ENCODE measurements at regions of chr1 and their contacts with region 1.

Region 1: GRCh38 chr1:201511941-201512539 is 5.1 kb upstream of the CSRP1 start:
- DNase-seq: no peak
- H3K4me3 ChIP-seq: no peak overlapping the region
- CTCF ChIP-seq: no peak

Region 2: DNA sequence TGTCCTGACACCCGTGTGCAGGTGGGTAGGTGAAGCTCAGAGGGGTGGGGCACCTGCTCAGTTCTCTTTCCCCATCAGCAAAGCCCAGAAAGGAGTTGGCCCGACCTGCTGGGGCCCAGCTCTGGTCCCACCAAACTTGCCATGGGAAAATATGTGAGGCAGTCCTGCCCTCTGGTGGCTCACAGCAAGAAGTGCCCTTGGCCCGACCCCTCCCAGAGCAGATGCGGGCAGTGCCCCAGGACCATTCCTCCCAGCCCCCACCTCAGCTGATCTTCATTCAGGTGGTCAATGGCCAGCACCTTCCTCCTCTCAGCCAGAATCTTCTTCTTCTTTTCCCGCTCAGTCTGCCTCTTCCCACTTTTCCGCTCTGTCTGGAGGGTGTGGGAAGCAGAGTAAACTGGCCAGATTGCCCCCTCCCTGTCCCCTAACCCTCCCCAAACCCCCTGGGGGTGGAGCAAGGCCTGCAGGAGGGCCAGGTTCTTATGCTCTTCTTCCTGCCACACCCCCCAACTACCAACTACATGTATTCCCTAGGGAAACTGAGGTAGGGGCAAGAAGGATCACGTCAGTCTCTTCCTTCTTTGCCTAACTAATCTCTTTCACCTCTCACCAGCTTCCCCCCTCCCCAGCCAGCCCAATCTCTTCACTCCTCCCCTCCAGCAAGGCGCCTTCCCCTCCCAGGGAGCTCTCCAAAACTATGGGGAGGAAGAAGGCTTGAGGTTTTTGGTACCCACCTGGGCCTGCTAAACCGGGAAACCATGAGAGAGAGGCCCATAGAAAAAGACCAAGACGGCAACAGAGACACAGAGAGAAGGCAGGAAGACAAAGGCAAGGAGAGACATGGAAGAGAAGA is 150.2 kb before region 1 on chr1:
- CTCF ChIA-PET with region 1: interaction called, 12 read pairs
- POLR2A ChIA-PET with region 1: no interaction called
- DNase-seq: no peak
- H3K4me3 ChIP-seq: no peak overlapping the region
- CTCF ChIP-seq: peak; percentile 88

Region 3: GRCh38 chr1:201419746-201420607 is 92.1 kb before region 1 on chr1:
- CTCF ChIA-PET with region 1: interaction called, 13 read pairs
- POLR2A ChIA-PET with region 1: no interaction called
- DNase-seq: no peak
- H3K4me3 ChIP-seq: no peak overlapping the region
- CTCF ChIP-seq: no peak

Region 4: DNA sequence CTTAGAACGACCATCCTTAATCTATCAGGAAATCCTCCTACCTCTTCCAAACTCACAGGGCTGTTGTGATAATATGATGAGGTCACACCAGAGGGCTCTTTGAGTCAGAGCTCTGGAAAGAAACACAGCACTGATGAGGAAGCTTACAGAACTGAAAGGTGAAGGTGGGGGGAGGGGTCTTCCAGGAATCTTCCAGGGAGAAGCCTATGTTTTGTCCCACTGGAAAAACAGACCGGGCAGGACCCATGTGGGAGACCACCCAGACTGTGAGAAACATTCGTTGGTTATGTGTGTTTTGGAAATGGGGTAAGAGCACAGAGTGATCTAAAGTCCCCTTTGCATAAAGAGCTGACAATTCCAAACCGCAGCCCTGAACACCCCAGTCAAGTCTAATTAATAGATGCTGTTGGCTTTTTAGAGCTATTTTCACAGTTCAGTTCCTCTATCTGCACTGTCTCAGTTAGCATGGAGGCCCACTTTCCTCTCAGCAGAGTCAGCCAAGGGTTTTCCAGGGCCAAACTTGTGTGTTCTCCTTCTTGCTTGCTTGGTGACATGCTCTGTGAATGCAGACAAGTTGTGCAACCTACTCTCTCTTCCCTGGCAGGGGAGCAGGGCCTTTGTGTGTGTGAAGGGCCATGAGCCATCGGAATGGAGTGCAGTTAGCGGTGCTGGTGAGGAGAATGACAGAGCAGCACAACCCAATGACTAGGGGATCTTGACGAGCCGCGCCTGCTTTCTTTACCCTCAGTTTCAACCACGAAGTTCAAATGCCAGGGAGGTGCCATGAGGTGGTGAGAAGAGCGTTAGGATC is 55.3 kb before region 1 on chr1:
- CTCF ChIA-PET with region 1: interaction called, 305 read pairs
- POLR2A ChIA-PET with region 1: interaction called, 6 read pairs
- DNase-seq: peak; percentile 96
- H3K4me3 ChIP-seq: no peak overlapping the region
- CTCF ChIP-seq: no peak

Region 5: GRCh38 chr1:201525197-201525778 is 13.2 kb after region 1 on chr1:
- CTCF ChIA-PET with region 1: interaction called, 170 read pairs
- POLR2A ChIA-PET with region 1: no interaction called
- DNase-seq: no peak
- H3K4me3 ChIP-seq: no peak overlapping the region
- CTCF ChIP-seq: no peak

Region 6: GRCh38 chr1:201703621-201704439 is 191.8 kb after region 1 on chr1:
- CTCF ChIA-PET with region 1: interaction called, 13 read pairs
- POLR2A ChIA-PET with region 1: no interaction called
- DNase-seq: no peak
- H3K4me3 ChIP-seq: no peak overlapping the region
- CTCF ChIP-seq: peak; percentile 94

Region 7: GRCh38 chr1:201766131-201766866 is 254.3 kb after region 1 on chr1:
- CTCF ChIA-PET with region 1: no interaction called
- POLR2A ChIA-PET with region 1: no interaction called
- DNase-seq: peak; percentile 91
- H3K4me3 ChIP-seq: no peak overlapping the region
- CTCF ChIP-seq: no peak

Measured in AG04449 (cell line).